ENCODE measurements at regions of chr5 and their contacts with region 1.

Region 1: GRCh38 chr5:95646554-95647431 is at the start of gene RFESD:
- DNase-seq: peak; percentile 94
- H3K4me3 Mint-ChIP-seq: peak within 1 kb of the TSS; percentile 76
- H3K27ac Mint-ChIP-seq: peak within 1 kb of the TSS; percentile 75
- H3K4me1 Mint-ChIP-seq: peaks cover 27% of the 10 kb centered on the region
- H3K27me3 Mint-ChIP-seq: peaks cover 3% of the 10 kb centered on the region
- total RNA-seq, gene RFESD: 3.0 and 6.0 TPM in 2 replicates

Region 2: GRCh38 chr5:95591490-95591901 is 55.3 kb before region 1 on chr5:
- intact Hi-C with region 1: loop called (anchors 1 kb)
- DNase-seq: no peak
- H3K4me3 Mint-ChIP-seq: no peak overlapping the region
- H3K27ac Mint-ChIP-seq: peak overlapping the region; percentile 24
- H3K4me1 Mint-ChIP-seq: peaks cover 23% of the 10 kb centered on the region
- H3K27me3 Mint-ChIP-seq: peaks cover 2% of the 10 kb centered on the region

Region 3: GRCh38 chr5:95718203-95718602 is 71.4 kb after region 1 on chr5:
- intact Hi-C with region 1: loop called (anchors 1 kb)
- DNase-seq: peak; percentile 18
- H3K4me3 Mint-ChIP-seq: no peak overlapping the region
- H3K27ac Mint-ChIP-seq: no peak overlapping the region
- H3K4me1 Mint-ChIP-seq: no peaks in the 10 kb centered on the region
- H3K27me3 Mint-ChIP-seq: peaks cover 28% of the 10 kb centered on the region

Region 4: GRCh38 chr5:95822542-95823181 is 175.9 kb after region 1 on chr5 and contains the start of gene GLRX:
- intact Hi-C with region 1: loop called (anchors 1 kb)
- DNase-seq: peak; percentile 55
- H3K4me3 Mint-ChIP-seq: peak within 1 kb of the TSS; percentile 91
- H3K27ac Mint-ChIP-seq: peak within 1 kb of the TSS; percentile 91
- H3K4me1 Mint-ChIP-seq: peaks cover 68% of the 10 kb centered on the region
- H3K27me3 Mint-ChIP-seq: no peaks in the 10 kb centered on the region
- total RNA-seq, gene GLRX: 17.2 and 18.3 TPM in 2 replicates

Region 5: DNA sequence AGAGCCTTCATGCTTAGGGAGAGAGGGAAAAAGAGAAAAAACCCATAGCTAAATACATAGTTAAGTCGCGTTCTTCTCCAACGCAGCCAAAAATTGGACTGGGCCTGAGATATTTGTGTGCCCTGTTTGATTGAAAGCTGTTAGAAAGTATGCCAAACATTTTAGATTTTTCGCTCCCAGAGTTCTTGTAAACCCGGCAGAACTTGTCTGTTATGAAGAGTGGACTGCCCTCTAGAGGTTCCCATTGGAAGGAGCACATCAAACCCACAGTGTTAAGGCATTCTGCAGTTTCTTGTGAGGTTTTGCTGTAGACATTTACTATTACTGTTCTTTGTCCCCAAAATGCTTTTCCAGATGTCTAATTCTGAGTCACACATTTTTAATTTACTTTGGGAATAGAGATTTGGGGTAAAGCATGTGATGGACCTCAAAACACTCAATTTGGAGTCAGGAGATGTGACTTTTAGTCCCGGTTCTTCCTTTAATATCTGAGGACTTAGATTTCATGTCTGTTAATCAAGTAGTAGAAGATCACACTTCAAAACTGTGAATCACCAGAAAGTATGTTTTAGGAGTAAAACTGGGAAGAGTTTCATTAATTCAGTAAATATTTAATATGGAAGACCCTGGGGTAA is 689.7 kb after region 1 on chr5:
- intact Hi-C with region 1: loop called (anchors 5 kb)
- DNase-seq: peak; percentile 51
- H3K4me3 Mint-ChIP-seq: no peak overlapping the region
- H3K27ac Mint-ChIP-seq: no peak overlapping the region
- H3K4me1 Mint-ChIP-seq: peaks cover 10% of the 10 kb centered on the region
- H3K27me3 Mint-ChIP-seq: peaks cover 12% of the 10 kb centered on the region

Region 6: GRCh38 chr5:97183100-97183929 is 1536.5 kb after region 1 on chr5 and contains the start of gene RIOK2:
- intact Hi-C with region 1: loop called (anchors 2 kb)
- DNase-seq: peak; percentile 86
- H3K4me3 Mint-ChIP-seq: peak within 1 kb of the TSS; percentile 91
- H3K27ac Mint-ChIP-seq: peak within 1 kb of the TSS; percentile 100
- H3K4me1 Mint-ChIP-seq: peaks cover 42% of the 10 kb centered on the region
- H3K27me3 Mint-ChIP-seq: peaks cover 9% of the 10 kb centered on the region
- total RNA-seq, gene RIOK2: 37.2 and 47.2 TPM in 2 replicates